ENCODE measurements at regions of chr12 and their contacts with region 1.

Region 1: DNA sequence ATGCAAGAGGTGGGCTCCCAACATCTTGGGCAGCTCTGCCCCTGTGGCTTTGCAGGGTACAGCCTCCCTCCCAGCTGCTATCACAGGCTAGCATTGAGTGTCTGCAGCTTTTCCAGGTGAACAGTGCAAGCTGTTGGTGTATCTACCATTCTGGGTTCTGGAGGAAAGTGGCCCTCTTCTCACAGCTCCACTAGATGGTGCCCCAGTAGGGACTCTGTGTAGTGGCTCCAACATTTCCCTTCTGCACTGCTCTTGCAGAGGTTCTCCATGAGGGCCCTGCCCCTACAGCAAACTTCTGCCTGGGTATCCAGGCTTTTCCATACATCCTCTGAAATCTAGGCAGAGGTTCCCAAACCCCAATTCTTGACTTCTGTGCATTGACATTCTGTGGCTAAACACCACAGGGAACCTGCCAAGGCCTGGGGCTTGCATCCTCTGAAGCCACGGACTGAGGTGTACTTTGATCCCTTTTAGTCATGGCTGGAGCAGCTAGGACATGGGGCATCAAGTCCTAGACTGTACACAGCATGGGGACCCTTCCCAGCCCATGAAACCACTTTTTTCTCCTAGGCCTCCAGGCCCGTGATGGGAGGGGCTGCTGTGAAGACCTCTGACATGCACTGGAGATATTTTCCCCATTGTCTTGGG is 24.0 kb upstream of the SLC38A1 start:
- DNase-seq: peak in 1 of 2 donors; percentile 1
- H3K4me3 ChIP-seq: no peak overlapping the region
- H3K27ac ChIP-seq: no peak overlapping the region
- H3K4me1 ChIP-seq: no peaks in the 10 kb centered on the region
- H3K27me3 ChIP-seq: no peaks in the 10 kb centered on the region
- CTCF ChIP-seq: no peak
- EP300 ChIP-seq: no peak
- POLR2A ChIP-seq: no peak

Region 2: DNA sequence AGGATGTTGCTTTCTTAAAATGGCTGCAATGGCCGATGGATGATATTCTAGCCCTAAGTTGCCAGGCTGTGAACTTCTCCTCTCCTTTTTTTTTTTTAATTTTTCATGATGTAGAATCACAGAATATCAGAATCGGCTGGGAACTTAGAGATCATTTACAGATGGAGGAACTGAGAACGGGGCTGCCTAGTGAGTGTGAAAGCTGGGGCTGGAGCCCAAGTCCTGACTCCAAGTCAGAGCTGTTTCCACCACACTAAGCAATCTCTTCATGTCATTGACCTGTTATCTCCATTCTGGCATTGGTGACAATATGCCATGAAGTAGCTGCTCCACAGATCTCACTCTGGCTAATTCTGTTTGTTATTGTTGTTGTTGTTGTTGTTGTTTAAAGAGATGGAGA is 145.7 kb before region 1 on chr12:
- intact Hi-C with region 1: loop called (anchors 10 kb)
- DNase-seq: no peak
- H3K4me3 ChIP-seq: no peak overlapping the region
- H3K27ac ChIP-seq: no peak overlapping the region
- H3K4me1 ChIP-seq: no peaks in the 10 kb centered on the region
- H3K27me3 ChIP-seq: peaks cover 0 to 8% (median 0%) of the 10 kb centered on the region in 3 donors
- CTCF ChIP-seq: no peak
- EP300 ChIP-seq: no peak
- POLR2A ChIP-seq: no peak

Measured in stomach (tissue), 19 donors.